CD14-positive monocyte (primary cell): ENCODE measurements at regions of chr2 and their contacts with region 1.

Region 1: GRCh38 chr2:219245148-219245898 is at the starts of genes GLB1L and STK16:
- DNase-seq: peak; percentile 92 to 93 (median 93)
- H3K4me3 ChIP-seq: peak within 1 kb of the TSS; percentile 57 to 83 (median 66)
- H3K4me3 Mint-ChIP-seq: peak within 1 kb of the TSS; percentile 83 to 90
- H3K27ac ChIP-seq: peak within 1 kb of the TSS; percentile 72 to 89
- H3K27ac Mint-ChIP-seq: peak within 1 kb of the TSS; percentile 92 to 97 (median 96)
- H3K4me1 ChIP-seq: peaks cover 68 to 70% of the 10 kb centered on the region in 2 donors
- H3K4me1 Mint-ChIP-seq: peaks cover 67% of the 10 kb centered on the region
- H3K27me3 ChIP-seq: no peaks in the 10 kb centered on the region
- H3K27me3 Mint-ChIP-seq: peaks cover 0 to 3% (median 1%) of the 10 kb centered on the region in 3 donors
- CTCF ChIP-seq: no peak
- polyA plus RNA-seq, gene GLB1L: 4.0 to 11.7 (median 7.7) TPM
- polyA plus RNA-seq, gene STK16: 16.7 to 40.7 (median 17.8) TPM

Region 2: GRCh38 chr2:219229305-219230058 is 15.8 kb before region 1 on chr2 and contains the starts of genes ANKZF1 and ATG9A:
- intact Hi-C with region 1: loop called in 1 of 2 experiments (anchors 2 kb)
- DNase-seq: peak; percentile 95 to 98 (median 96)
- H3K4me3 ChIP-seq: peak within 1 kb of the TSS; percentile 80 to 89 (median 81)
- H3K4me3 Mint-ChIP-seq: peak within 1 kb of the TSS; percentile 95 to 98
- H3K27ac ChIP-seq: peak within 1 kb of the TSS; percentile 67 to 86
- H3K27ac Mint-ChIP-seq: peak within 1 kb of the TSS; percentile 88 to 99 (median 96)
- H3K4me1 ChIP-seq: peaks cover 45 to 48% of the 10 kb centered on the region in 2 donors
- H3K4me1 Mint-ChIP-seq: peaks cover 51% of the 10 kb centered on the region
- H3K27me3 ChIP-seq: peaks cover 0 to 12% of the 10 kb centered on the region in 2 donors
- H3K27me3 Mint-ChIP-seq: peaks cover 16 to 26% (median 22%) of the 10 kb centered on the region in 3 donors
- CTCF ChIP-seq: no peak
- polyA plus RNA-seq, gene ANKZF1: 7.6 to 79.3 (median 10.4) TPM
- polyA plus RNA-seq, gene ATG9A: 24.7 to 55.2 (median 26.3) TPM